ENCODE measurements at regions of chr15 and their contacts with region 1.

Region 1: DNA sequence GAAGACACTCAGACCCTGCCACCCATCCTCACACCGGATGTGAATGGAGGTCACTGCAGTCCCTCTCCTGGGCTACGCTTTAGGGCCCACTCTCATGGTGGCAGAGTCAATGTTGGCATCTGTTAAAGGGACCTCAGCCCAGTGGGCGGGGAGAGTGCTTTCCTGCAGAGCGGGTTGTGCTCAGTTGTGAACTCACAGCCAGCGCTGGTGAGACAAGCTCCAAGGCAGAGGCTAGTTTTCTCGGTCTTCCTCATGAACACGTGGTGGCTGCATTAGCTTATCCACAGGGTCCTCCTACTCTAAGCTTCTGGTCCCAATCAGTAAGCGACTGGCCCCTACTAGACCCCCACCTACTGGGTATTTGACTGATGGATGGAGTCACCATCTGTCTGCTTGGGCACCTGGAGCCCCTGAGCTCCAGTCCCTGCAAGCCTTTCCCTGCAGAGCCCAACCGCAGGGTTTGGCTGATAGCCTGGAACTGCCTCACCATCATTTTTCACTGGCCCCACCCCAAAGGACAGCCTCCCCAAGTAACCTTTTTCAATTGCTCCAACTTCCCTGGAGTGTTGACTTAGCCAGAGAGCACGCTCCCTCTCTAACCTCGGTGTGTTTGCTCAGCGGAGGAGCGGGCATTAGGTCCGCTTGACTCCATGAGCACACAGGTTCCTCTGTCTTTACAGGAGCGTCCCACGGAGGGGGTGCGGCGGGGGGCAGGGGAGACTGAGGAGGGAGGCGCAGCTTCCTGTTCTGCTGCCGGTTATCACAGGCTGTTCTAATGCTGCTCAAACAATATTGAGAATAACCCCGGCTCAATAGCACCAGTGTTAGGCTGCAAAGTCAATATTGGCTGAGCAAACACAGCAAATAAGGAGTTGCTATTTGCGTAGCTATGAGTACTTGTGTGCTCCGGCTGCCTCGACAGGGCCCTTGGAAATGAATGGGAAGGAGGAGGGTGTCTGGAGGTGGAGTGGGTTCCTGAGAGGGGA is 141.7 kb downstream of the RPLP1 start:
- DNase-seq: peak; percentile 95 to 97
- H3K4me3 ChIP-seq: no peak overlapping the region
- H3K4me3 Mint-ChIP-seq: peak overlapping the region; percentile 45
- H3K27ac Mint-ChIP-seq: peak overlapping the region; percentile 78
- H3K4me1 ChIP-seq: peaks cover 43% of the 10 kb centered on the region
- H3K4me1 Mint-ChIP-seq: peaks cover 27% of the 10 kb centered on the region
- H3K27me3 ChIP-seq: no peaks in the 10 kb centered on the region
- H3K27me3 Mint-ChIP-seq: peaks cover 17% of the 10 kb centered on the region
- CTCF ChIP-seq: no peak

Region 2: GRCh38 chr15:69462493-69463181 is 131.6 kb before region 1 on chr15:
- CTCF ChIA-PET with region 1: interaction called, 9 read pairs
- POLR2A ChIA-PET with region 1: interaction called, 6 read pairs
- intact Hi-C with region 1: loop called (anchors 1 kb)
- DNase-seq: peak; percentile 95 to 96
- H3K4me3 ChIP-seq: peak overlapping the region; percentile 46
- H3K4me3 Mint-ChIP-seq: peak overlapping the region; percentile 88
- H3K27ac Mint-ChIP-seq: peak overlapping the region; percentile 93
- H3K4me1 ChIP-seq: peaks cover 25% of the 10 kb centered on the region
- H3K4me1 Mint-ChIP-seq: peaks cover 17% of the 10 kb centered on the region
- H3K27me3 ChIP-seq: no peaks in the 10 kb centered on the region
- H3K27me3 Mint-ChIP-seq: no peaks in the 10 kb centered on the region
- CTCF ChIP-seq: peak; percentile 78 to 79

Region 3: DNA sequence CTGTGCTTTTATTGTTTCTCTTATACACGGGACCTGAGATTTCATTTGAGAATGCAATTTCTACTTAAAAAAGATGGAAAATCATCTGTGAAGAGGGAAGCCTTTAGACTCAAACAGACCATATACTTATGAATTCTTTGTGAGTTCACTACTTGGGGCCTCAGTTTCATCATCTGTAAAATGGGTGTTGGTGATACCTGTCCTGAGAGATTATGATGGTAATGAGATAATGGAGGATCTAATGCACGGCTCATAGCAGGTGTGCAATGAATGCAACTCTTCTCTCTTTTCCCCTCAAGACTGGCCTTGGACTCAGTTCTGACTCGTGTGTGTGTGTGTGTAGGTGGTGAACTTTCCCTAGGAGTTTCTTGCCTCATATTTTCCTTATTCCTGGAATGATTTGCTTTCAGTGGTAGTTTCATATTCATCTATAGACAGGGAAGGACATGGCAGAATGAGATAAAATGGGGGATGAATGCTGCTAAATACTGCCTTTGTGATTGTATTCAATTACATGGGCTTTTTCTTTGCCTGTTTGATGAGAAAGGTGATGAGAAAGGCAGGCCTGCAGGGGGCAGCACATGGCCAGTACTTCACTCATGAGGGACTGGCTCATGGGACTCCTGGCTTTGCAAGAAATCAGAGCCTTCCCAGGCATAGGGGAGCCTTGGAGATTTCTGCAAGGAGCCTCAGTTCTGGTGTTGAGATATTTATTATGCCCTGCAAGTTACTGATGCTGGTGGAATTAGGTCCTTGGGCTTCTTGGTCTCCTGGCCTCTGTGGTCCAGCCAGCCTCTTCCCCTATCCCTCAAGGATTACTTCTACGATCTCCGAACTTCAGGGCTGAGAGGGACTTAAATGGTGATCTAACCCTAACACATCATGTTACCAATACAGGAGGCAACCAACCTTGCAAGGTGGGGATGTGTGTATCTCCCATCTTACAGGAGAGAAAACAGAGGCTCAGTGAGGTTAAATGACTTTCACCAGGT is 71.0 kb before region 1 on chr15:
- CTCF ChIA-PET with region 1: interaction called, 3 read pairs
- POLR2A ChIA-PET with region 1: no interaction called
- intact Hi-C with region 1: loop called (anchors 5 kb)
- DNase-seq: peak; percentile 78 to 84
- H3K4me3 ChIP-seq: no peak overlapping the region
- H3K4me3 Mint-ChIP-seq: no peak overlapping the region
- H3K27ac Mint-ChIP-seq: no peak overlapping the region
- H3K4me1 ChIP-seq: peaks cover 10% of the 10 kb centered on the region; the same call in 1 of the 2 replicates
- H3K4me1 Mint-ChIP-seq: no peaks in the 10 kb centered on the region
- H3K27me3 ChIP-seq: no peaks in the 10 kb centered on the region
- H3K27me3 Mint-ChIP-seq: no peaks in the 10 kb centered on the region
- CTCF ChIP-seq: peak; percentile 63 to 71

Region 4: GRCh38 chr15:69559440-69560190 is 34.7 kb before region 1 on chr15:
- CTCF ChIA-PET with region 1: interaction called, 7 read pairs
- POLR2A ChIA-PET with region 1: no interaction called
- intact Hi-C with region 1: loop called (anchors 1 kb)
- DNase-seq: no peak
- H3K4me3 ChIP-seq: no peak overlapping the region
- H3K4me3 Mint-ChIP-seq: no peak overlapping the region
- H3K27ac Mint-ChIP-seq: no peak overlapping the region
- H3K4me1 ChIP-seq: peaks cover 62% of the 10 kb centered on the region
- H3K4me1 Mint-ChIP-seq: peaks cover 49% of the 10 kb centered on the region
- H3K27me3 ChIP-seq: no peaks in the 10 kb centered on the region
- H3K27me3 Mint-ChIP-seq: no peaks in the 10 kb centered on the region
- CTCF ChIP-seq: no peak

Region 5: GRCh38 chr15:69615736-69616135 is 21.5 kb after region 1 on chr15:
- CTCF ChIA-PET with region 1: no interaction called
- POLR2A ChIA-PET with region 1: no interaction called
- intact Hi-C with region 1: no loop called
- DNase-seq: no peak
- H3K4me3 ChIP-seq: no peak overlapping the region
- H3K4me3 Mint-ChIP-seq: no peak overlapping the region
- H3K27ac Mint-ChIP-seq: no peak overlapping the region
- H3K4me1 ChIP-seq: no peaks in the 10 kb centered on the region
- H3K4me1 Mint-ChIP-seq: no peaks in the 10 kb centered on the region
- H3K27me3 ChIP-seq: no peaks in the 10 kb centered on the region; the same call in 1 of the 2 replicates
- H3K27me3 Mint-ChIP-seq: peaks cover 4% of the 10 kb centered on the region
- CTCF ChIP-seq: no peak

Region 6: DNA sequence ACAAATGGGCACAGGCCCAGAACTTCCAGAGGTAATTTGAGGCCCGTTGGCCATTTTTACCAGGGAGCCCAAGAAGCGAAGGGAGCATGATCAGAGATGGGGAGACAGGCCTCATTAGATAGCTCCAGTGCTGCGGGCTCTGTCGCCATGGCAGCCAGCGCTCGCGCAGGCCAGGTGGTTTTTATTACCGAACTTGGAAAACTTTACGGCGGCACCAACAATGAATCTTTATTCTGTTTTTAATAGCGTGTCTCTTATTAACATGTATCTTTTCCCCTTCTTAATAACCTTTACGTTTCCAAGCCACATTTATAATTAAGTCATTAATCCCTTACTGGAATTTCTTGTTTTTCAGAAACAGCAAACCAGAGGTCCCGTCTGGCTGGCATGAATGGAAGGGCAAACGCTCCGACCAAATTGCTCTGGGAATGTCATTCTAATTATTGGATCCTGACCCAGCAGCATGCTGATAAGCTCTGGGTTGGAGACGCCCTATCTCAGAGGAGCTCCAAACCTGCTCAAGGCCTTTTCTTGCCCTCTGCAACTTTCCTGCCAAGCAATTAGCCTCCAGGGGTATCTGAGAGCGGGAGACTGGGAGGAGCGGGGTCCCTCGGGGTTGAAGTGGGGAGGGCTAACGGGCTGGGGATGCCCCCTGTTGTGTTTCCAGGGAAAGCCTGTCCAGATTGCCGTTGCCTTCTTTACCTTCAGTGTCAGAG is 247.0 kb after region 1 on chr15:
- CTCF ChIA-PET with region 1: no interaction called
- POLR2A ChIA-PET with region 1: no interaction called
- intact Hi-C with region 1: no loop called
- DNase-seq: no peak
- H3K4me3 ChIP-seq: no peak overlapping the region
- H3K4me3 Mint-ChIP-seq: no peak overlapping the region
- H3K27ac Mint-ChIP-seq: no peak overlapping the region
- H3K4me1 ChIP-seq: no peaks in the 10 kb centered on the region
- H3K4me1 Mint-ChIP-seq: no peaks in the 10 kb centered on the region
- H3K27me3 ChIP-seq: no peaks in the 10 kb centered on the region
- H3K27me3 Mint-ChIP-seq: no peaks in the 10 kb centered on the region
- CTCF ChIP-seq: no peak

Region 7: DNA sequence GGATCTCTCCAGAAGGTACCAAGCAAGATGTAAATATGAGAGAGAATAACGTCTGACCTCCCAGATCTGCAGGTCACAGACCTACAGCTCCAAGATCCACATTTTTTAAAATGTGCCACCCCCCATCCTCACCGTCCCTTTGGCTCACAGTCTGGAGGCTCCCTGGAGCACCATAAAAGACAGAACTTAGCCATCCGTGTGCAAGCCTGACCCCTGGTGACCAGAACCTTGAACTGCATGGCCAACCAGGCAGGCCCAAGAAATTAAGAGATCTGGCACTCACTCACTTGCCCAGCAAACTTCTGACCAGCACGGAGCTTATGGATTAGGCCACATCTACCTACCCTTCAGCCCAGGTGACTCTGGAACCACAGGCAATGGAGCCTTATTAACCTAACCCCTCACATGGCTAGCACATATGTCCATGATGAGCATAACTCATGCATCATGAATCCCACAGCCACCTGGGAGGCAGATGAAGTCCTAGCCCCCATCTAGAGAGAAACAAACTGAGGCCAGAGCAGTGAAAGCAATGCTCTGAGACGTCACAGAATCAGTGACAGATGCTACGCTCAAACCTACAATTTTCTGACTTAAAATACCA is 893.8 kb after region 1 on chr15:
- CTCF ChIA-PET with region 1: no interaction called
- POLR2A ChIA-PET with region 1: no interaction called
- intact Hi-C with region 1: loop called (anchors 5 kb)
- DNase-seq: peak; percentile 58 to 75
- H3K4me3 ChIP-seq: no peak overlapping the region
- H3K4me3 Mint-ChIP-seq: no peak overlapping the region
- H3K27ac Mint-ChIP-seq: no peak overlapping the region
- H3K4me1 ChIP-seq: peaks cover 8% of the 10 kb centered on the region
- H3K4me1 Mint-ChIP-seq: peaks cover 15% of the 10 kb centered on the region
- H3K27me3 ChIP-seq: no peaks in the 10 kb centered on the region
- H3K27me3 Mint-ChIP-seq: no peaks in the 10 kb centered on the region
- CTCF ChIP-seq: peak; percentile 85